Sigmoid colon (tissue), 7 donors: ENCODE measurements at regions of chr6 and their contacts with region 1.

Region 1: DNA sequence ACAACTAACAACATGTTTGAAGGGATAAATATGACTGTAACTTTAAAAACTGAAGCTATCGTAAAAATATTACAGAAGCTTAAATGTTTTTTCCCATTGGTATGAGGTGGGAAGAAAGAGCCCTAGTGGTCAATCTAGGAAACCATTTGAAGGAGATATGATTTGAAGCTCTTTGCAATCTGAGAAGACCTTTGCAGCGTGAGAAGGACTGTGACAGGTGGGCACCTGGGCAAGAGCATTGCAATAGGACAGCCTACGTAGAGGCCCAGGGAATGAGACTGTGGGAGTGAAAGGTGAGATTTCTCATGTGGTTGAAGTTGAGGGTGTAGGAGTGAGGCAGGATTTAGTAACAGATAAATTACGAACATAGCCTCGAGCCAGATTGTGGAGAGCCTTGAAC is 108.0 kb upstream of the PDE7B start:
- DNase-seq: no peak
- H3K4me3 ChIP-seq: no peak overlapping the region
- H3K27ac ChIP-seq: no peak overlapping the region
- H3K4me1 ChIP-seq: no peaks in the 10 kb centered on the region
- H3K27me3 ChIP-seq: no peaks in the 10 kb centered on the region
- CTCF ChIP-seq: no peak
- EP300 ChIP-seq: no peak
- POLR2A ChIP-seq: no peak

Region 2: DNA sequence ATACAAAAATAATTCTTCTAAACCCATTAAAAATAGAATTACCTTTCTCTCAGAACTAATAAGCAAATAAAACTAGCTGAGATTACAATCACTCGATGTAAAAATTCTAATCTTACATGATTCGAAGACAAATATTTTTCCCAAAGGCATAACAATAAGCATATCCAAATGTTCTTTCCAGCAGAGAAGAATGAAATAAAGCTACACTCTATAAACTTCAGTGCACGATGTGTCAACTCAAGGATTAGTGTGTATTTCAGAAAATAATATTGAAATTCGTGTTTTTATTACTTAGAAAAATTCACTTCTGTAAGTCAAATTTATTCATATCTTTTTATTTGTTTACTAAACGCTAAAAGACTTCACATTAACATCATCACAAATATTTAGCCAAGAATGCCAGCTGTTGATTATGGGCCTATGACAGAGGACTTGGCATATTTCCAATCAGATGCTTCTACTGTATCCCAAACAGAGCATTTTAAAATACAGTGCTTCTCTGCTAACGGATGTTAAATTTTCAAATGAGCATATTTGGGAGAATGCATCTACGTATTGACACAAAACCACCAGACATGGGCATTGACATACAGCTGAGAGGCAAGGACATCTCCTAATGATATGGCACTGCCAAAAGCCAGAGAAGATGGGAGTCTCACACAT is 53.3 kb after region 1 on chr6:
- intact Hi-C with region 1: no loop called
- DNase-seq: no peak
- H3K4me3 ChIP-seq: no peak overlapping the region
- H3K27ac ChIP-seq: no peak overlapping the region
- H3K4me1 ChIP-seq: no peaks in the 10 kb centered on the region
- H3K27me3 ChIP-seq: peaks cover 0 to 4% (median 0%) of the 10 kb centered on the region in 3 donors
- CTCF ChIP-seq: no peak
- EP300 ChIP-seq: no peak
- POLR2A ChIP-seq: no peak

Region 3: GRCh38 chr6:135819665-135820064 is 76.2 kb after region 1 on chr6:
- intact Hi-C with region 1: loop called (anchors 10 kb)
- DNase-seq: no peak
- H3K4me3 ChIP-seq: no peak overlapping the region
- H3K27ac ChIP-seq: no peak overlapping the region
- H3K4me1 ChIP-seq: no peaks in the 10 kb centered on the region
- H3K27me3 ChIP-seq: no peaks in the 10 kb centered on the region
- CTCF ChIP-seq: no peak
- EP300 ChIP-seq: no peak
- POLR2A ChIP-seq: no peak